ENCODE measurements at regions of chr13 and their contacts with region 1.

Region 1: DNA sequence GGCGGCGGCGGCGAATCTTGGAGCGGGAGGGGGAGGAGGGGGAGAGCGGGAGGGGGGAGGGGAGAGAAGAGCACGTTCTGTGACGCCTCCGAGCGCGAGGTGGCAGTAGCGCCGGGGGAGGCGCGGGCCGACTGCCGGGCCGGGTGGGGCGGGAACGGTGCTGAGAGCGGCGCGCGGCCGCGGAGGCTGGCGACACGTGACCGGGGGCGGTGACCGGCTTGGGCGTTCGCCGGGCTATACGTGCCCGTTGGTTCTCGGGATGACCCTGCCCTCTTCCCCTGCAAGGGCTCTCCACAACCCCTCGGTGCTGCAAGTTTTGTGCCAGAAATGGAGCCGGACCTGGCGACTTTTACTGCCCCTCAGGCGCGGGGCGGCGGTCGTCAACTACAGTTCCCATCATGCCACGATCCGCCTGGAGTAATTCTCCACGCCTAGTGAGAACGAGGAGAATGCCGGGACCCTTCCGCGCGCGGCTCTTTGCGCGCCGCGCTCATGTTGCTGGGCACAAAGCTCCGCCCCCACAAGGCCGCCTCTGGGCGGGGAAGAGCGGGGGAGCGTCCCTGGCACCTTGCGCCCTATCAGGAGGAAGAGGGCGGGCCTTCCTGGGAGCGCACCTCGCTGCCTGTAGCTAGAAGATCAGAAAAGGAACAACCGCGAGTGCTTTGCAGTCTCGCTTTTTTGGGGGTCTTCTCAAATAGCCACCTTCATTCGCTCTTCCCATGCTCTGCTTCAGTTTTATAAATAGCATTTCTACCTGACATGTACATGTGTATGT is at the start of gene KPNA3:
- DNase-seq: peak; percentile 96
- H3K4me3 ChIP-seq: peak within 1 kb of the TSS; percentile 87
- H3K27ac ChIP-seq: peak within 1 kb of the TSS; percentile 99
- H3K4me1 ChIP-seq: peaks cover 44% of the 10 kb centered on the region
- H3K27me3 ChIP-seq: no peaks in the 10 kb centered on the region
- CTCF ChIP-seq: peak; percentile 22
- total RNA-seq, gene KPNA3: 60.0 TPM

Region 2: DNA sequence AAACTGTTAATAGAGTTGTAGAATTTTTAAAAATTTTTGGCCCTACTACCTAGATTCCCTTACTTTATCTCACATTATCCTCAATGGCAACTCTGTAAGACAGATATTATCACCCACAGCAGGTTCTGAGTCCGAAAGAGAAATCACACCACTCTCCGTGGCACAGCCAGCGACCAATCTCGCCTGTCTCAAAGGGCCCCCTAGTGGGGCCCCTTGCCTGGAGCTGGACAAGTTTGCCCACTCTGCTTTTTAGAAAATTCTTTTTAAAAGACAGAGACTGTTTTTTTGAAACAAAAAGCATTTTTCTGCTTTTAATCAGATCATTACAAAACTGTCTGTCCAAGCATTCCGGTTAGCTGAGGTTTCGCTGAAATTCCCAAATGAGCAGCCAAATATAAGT is 275.3 kb before region 1 on chr13:
- intact Hi-C with region 1: no loop called
- DNase-seq: no peak
- H3K4me3 ChIP-seq: no peak overlapping the region
- H3K27ac ChIP-seq: no peak overlapping the region
- H3K4me1 ChIP-seq: peaks cover 23% of the 10 kb centered on the region
- H3K27me3 ChIP-seq: no peaks in the 10 kb centered on the region
- CTCF ChIP-seq: peak; percentile 45

Region 3: GRCh38 chr13:49690992-49691886 is 101.5 kb before region 1 on chr13 and contains the start of gene EBPL:
- intact Hi-C with region 1: loop called (anchors 10 kb)
- DNase-seq: peak; percentile 93
- H3K4me3 ChIP-seq: peak within 1 kb of the TSS; percentile 83
- H3K27ac ChIP-seq: peak within 1 kb of the TSS; percentile 84
- H3K4me1 ChIP-seq: peaks cover 18% of the 10 kb centered on the region
- H3K27me3 ChIP-seq: no peaks in the 10 kb centered on the region
- CTCF ChIP-seq: no peak
- total RNA-seq, gene EBPL: 6.0 TPM

Region 4: GRCh38 chr13:49890376-49890775 is 97.6 kb after region 1 on chr13:
- intact Hi-C with region 1: no loop called
- DNase-seq: no peak
- H3K4me3 ChIP-seq: no peak overlapping the region
- H3K27ac ChIP-seq: no peak overlapping the region
- H3K4me1 ChIP-seq: no peaks in the 10 kb centered on the region
- H3K27me3 ChIP-seq: no peaks in the 10 kb centered on the region
- CTCF ChIP-seq: no peak